Activated T-helper 1 cell treated with anti-CD3 and anti-CD28 coated beads, Interleukin-12 subunit alpha, Interleukin-12 subunit beta, Interleukin-2, Interleukin-4 antibody, amounts not matched to agents 30 ng/mL and 10 ng/mL and 1 ng/mL, durations not matched to agents 14 hours and 24 hours and 36 hours (primary cell): ENCODE measurements at regions of chr19 and their contacts with region 1.

Region 1: GRCh38 chr19:1039646-1040475 is at the start of gene ABCA7:
- DNase-seq: peak; percentile 100
- H3K4me3 Mint-ChIP-seq: peak within 1 kb of the TSS; percentile 97
- H3K27ac Mint-ChIP-seq: peak within 1 kb of the TSS; percentile 86
- H3K4me1 Mint-ChIP-seq: peaks cover 51% of the 10 kb centered on the region
- H3K27me3 Mint-ChIP-seq: no peaks in the 10 kb centered on the region
- total RNA-seq, gene ABCA7: 15.8 and 18.3 TPM in 2 replicates

Region 2: DNA sequence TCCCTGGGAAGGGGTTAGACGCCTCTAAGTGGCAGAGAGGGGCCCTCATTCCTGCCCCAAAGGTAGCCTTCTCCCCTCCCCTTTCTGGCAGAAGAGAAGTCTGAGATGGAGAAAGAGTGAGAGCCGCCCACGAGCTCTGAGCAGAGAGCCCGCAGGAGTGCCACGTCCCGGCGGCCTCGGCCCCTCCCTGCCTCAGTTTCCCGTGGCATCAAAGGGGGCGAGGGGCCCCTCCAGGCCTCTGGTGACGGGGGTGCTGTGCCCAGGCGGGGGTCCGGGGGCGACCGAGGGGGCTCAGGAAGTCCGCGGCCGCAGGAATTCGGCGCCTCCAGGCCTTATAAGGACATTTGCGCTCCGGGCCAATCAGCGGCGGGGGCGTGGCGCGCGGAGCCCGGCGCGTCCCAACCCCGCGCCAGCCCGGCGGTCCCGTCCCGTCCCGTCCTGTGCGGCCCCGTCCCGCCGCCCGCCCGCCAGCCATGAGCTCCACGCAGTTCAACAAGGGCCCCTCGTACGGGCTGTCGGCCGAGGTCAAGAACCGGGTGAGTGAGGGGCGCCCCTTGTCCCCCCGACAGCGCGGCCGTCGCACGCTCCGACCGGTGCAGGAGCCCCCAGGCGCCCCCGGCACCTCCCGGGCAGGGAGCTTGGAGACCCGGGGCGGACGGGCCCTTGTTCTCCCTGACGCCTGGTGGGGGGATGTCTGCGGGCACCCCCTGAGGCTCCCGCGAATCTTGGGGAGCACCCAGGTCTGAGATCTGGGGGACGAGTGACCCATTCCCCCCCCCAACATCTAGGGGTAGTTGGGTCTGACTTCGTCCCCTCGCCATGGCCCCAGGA is 13.5 kb before region 1 on chr19 and contains the start of gene CNN2:
- intact Hi-C with region 1: loop called (anchors 1 kb)
- DNase-seq: peak; percentile 73
- H3K4me3 Mint-ChIP-seq: peak within 1 kb of the TSS; percentile 95
- H3K27ac Mint-ChIP-seq: peak within 1 kb of the TSS; percentile 87
- H3K4me1 Mint-ChIP-seq: peaks cover 21% of the 10 kb centered on the region
- H3K27me3 Mint-ChIP-seq: peaks cover 2% of the 10 kb centered on the region
- total RNA-seq, gene CNN2: 112 and 114 TPM in 2 replicates

Region 3: DNA sequence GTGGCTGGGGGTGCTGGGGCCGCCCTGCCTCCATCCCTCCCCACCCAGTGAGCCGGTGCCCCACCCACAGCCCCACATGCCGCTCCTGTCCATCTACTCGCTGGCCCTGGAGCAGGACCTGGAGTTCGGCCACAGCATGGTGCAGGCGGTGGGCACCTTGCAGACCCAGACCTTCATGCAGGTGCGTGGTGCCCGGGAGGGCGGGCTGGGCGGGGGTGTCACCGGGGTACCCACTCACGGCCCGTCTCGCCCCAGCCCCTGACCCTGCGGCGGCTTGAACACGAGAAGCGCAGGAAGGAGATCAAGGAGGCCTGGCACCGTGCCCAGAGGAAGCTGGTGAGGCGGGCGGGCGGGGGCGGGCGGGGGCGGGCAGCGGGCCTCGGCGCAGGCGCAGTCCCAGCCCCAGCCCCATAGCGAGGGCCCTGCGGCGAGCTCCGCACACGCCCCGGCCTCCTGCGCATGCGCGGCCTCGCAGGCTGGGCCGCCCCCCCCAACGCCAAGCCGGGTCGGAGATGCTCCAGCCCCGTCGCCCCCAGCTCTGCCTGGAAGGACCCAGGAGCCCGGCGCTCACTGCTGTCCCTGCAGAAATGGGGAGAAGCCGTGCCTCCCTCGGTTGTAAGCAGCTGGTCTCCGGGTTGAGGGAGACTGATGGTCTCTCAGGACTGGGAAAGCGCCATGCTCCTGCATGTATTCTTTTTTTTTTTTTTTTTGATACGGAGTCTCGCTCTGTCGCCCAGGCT is 34.9 kb after region 1 on chr19:
- intact Hi-C with region 1: loop called (anchors 1 kb)
- DNase-seq: peak; percentile 69
- H3K4me3 Mint-ChIP-seq: peak overlapping the region; percentile 79
- H3K27ac Mint-ChIP-seq: peak overlapping the region; percentile 90
- H3K4me1 Mint-ChIP-seq: peaks cover 35% of the 10 kb centered on the region
- H3K27me3 Mint-ChIP-seq: no peaks in the 10 kb centered on the region

Region 4: GRCh38 chr19:1103708-1104310 is 63.9 kb after region 1 on chr19 and contains the start of gene GPX4:
- intact Hi-C with region 1: loop called (anchors 2 kb)
- DNase-seq: peak; percentile 96
- H3K4me3 Mint-ChIP-seq: peak within 1 kb of the TSS; percentile 80
- H3K27ac Mint-ChIP-seq: peak within 1 kb of the TSS; percentile 90
- H3K4me1 Mint-ChIP-seq: peaks cover 30% of the 10 kb centered on the region
- H3K27me3 Mint-ChIP-seq: peaks cover 2% of the 10 kb centered on the region
- total RNA-seq, gene GPX4: 236 and 241 TPM in 2 replicates